ENCODE measurements at regions of chr4 and their contacts with region 1.

Region 1: DNA sequence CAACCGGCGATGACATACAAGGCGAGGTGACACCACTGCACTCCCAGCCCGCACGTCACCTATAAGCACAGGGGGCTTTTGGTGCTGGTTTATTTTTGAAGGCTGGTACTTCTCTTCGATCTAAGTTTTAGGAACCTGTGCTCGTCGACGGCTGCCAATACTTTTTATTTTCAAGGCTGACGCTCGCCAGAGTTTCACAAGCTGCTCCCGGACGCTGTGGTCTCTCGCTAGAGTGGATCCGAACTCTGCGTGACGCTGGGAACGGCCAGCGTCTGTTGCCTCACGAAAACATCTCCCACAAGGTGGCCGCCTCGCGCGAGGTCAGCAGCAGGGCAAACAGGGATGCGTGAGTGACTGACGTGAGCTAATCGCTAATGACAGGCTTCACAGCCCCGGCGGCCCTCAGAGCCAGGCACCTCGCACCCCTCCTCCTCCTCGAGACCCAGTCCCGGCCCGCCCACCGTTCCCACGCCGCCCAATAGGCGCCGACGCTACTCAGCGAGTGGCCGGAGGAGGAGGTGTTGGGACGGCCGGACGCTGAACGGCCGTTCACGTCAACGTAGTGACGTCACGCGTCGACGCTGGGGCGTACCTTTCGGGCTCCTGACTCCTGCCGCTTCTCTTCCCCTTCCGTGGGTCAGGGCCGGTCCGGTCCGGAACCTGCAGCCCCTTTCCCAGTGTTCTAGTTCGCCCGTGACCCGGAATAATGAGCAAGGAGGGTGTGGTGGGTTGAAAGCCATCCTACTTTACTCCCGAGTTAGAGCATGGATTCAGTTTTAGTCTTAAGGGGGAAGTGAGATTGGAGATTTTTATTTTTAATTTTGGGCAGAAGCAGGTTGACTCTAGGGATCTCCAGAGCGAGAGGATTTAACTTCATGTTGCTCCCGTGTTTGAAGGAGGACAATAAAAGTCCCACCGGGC is at the start of gene CLCN3:
- DNase-seq: peak; percentile 94 to 99 (median 96)
- ATAC-seq: peak; percentile 91
- H3K4me3 ChIP-seq: peak within 1 kb of the TSS; percentile 53
- H3K27ac ChIP-seq: peak within 1 kb of the TSS; percentile 98
- H3K4me1 ChIP-seq: peaks cover 4 to 31% of the 10 kb centered on the region in 2 experiments; a peak in 4 of 5 replicates
- H3K27me3 ChIP-seq: no peaks in the 10 kb centered on the region
- CTCF ChIP-seq: peak in 1 of 3 experiments; percentile 11; a peak in 1 of 6 replicates
- EP300 ChIP-seq: peak; percentile 35
- POLR2A ChIP-seq: peak; percentile 95
- RAD21 ChIP-seq: peak; percentile 5 to 17; a peak in 2 of 4 replicates
- polyA plus RNA-seq, gene CLCN3: 12.7 to 22.8 TPM

Region 2: GRCh38 chr4:168758351-168758876 is 861.8 kb before region 1 on chr4:
- CTCF ChIA-PET with region 1: no interaction called
- POLR2A ChIA-PET with region 1: no interaction called
- in situ Hi-C with region 1: no loop called
- intact Hi-C with region 1: no loop called
- DNase-seq: no peak
- ATAC-seq: no peak
- H3K4me3 ChIP-seq: no peak overlapping the region
- H3K27ac ChIP-seq: no peak overlapping the region
- H3K4me1 ChIP-seq: no peaks in the 10 kb centered on the region
- H3K27me3 ChIP-seq: no peaks in the 10 kb centered on the region; a peak in 1 of 5 replicates
- CTCF ChIP-seq: no peak
- EP300 ChIP-seq: no peak
- POLR2A ChIP-seq: no peak
- RAD21 ChIP-seq: no peak

Region 3: GRCh38 chr4:169269916-169270809 is 350.1 kb before region 1 on chr4:
- CTCF ChIA-PET with region 1: no interaction called
- POLR2A ChIA-PET with region 1: no interaction called
- in situ Hi-C with region 1: no loop called
- intact Hi-C with region 1: no loop called
- DNase-seq: peak; percentile 20 to 32 (median 30)
- ATAC-seq: peak; percentile 79
- H3K4me3 ChIP-seq: peak overlapping the region; percentile 30
- H3K27ac ChIP-seq: no peak overlapping the region
- H3K4me1 ChIP-seq: peaks cover 0 to 18% of the 10 kb centered on the region in 2 experiments; a peak in 2 of 5 replicates
- H3K27me3 ChIP-seq: peaks cover 19 to 29% of the 10 kb centered on the region in 2 experiments; a peak in 4 of 5 replicates
- CTCF ChIP-seq: no peak
- EP300 ChIP-seq: no peak
- POLR2A ChIP-seq: no peak
- RAD21 ChIP-seq: no peak

Region 4: DNA sequence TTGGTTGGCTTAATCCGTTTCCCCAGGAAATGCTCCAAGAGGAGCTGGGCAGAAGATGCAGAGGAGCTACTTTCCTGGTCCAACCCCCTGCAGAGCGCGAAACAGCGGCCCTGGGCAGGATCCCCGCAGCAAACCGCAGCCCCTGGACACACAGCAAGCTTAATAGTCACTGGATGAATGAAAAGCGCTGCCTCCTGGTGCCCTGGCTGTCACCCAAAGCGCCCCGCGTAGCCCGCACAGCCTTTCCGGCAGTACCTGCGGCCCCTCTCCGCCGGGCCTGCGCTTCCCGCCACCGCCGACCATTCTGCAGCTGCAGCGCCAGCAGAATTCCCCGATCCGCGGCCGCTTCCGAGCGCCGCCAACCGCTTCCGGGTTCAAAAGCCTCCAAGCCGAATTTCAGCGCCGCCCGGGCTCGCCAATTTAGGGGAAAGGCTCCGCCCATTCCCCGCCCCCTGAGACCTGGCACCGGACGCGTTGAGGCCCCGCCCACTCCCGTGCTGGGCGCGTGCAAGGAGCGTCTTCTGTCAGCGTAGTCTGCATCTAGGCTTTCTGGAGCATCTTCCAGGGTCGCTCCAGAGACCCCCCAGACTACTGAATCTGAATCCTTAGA is 137.5 kb after region 1 on chr4 and contains the start of gene HPF1:
- CTCF ChIA-PET with region 1: no interaction called
- POLR2A ChIA-PET with region 1: no interaction called
- in situ Hi-C with region 1: loop called (anchors 10 kb)
- intact Hi-C with region 1: loop called (anchors 2 kb)
- DNase-seq: peak; percentile 97 to 98 (median 98)
- ATAC-seq: peak; percentile 94
- H3K4me3 ChIP-seq: peak within 1 kb of the TSS; percentile 85
- H3K27ac ChIP-seq: peak within 1 kb of the TSS; percentile 78
- H3K4me1 ChIP-seq: peaks cover 5 to 11% of the 10 kb centered on the region in 2 experiments; a peak in 3 of 5 replicates
- H3K27me3 ChIP-seq: no peaks in the 10 kb centered on the region
- CTCF ChIP-seq: 0 out of 6 replicates have a peak, but pooled peaks of 2 of the 3 experiments have one; percentile 8 to 11
- EP300 ChIP-seq: no peak
- POLR2A ChIP-seq: peak; percentile 72
- RAD21 ChIP-seq: no peak
- polyA plus RNA-seq, gene HPF1: 33.5 to 35.2 TPM

Region 5: DNA sequence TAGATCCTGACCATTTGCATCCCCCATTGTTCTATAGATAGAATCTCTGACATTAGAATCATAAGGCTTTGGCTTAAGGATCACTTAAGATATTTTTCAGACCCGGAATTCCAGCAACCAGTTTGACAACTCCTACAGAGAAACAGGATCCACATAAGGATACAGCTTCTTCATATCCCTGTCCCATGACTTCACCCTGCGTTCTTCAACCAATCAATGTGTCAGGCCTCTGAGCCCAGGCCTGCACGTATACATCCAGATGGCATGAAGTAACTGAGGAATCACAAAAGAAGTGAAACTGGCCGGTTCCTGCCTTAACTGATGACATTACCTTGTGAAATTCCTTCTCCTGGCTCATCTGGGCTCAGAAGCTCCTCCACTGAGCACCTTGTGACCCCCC is 320.9 kb after region 1 on chr4:
- CTCF ChIA-PET with region 1: no interaction called
- POLR2A ChIA-PET with region 1: no interaction called
- in situ Hi-C with region 1: no loop called
- intact Hi-C with region 1: no loop called
- DNase-seq: no peak
- ATAC-seq: no peak
- H3K4me3 ChIP-seq: no peak overlapping the region
- H3K27ac ChIP-seq: no peak overlapping the region
- H3K4me1 ChIP-seq: no peaks in the 10 kb centered on the region; a peak in 1 of 5 replicates
- H3K27me3 ChIP-seq: peaks cover 0 to 6% of the 10 kb centered on the region in 2 experiments; a peak in 2 of 5 replicates
- CTCF ChIP-seq: no peak
- EP300 ChIP-seq: no peak
- POLR2A ChIP-seq: no peak
- RAD21 ChIP-seq: no peak

Measured in K562 (cell line).